Left cardiac atrium (tissue), 4 donors: ENCODE measurements at regions of chr14 and their contacts with region 1.

Region 1: GRCh38 chr14:87944987-87945604 is 47.9 kb downstream of the GALC start:
- DNase-seq: no peak
- ATAC-seq: no peak

Region 2: GRCh38 chr14:88168498-88169165 is 223.5 kb after region 1 on chr14:
- intact Hi-C with region 1: loop called in 1 of 2 experiments (anchors 5 kb)
- DNase-seq: no peak
- ATAC-seq: peak; percentile 74 to 85